ENCODE measurements at regions of chr18 and their contacts with region 1.

Region 1: GRCh38 chr18:3281456-3282400 is 19.8 kb downstream of the MYL12B start:
- DNase-seq: no peak
- ATAC-seq: peak; percentile 39
- H3K4me3 Mint-ChIP-seq: no peak overlapping the region
- H3K27ac Mint-ChIP-seq: no peak overlapping the region
- H3K4me1 Mint-ChIP-seq: peaks cover 41% of the 10 kb centered on the region
- H3K27me3 Mint-ChIP-seq: no peaks in the 10 kb centered on the region
- CTCF ChIP-seq: peak; percentile 49

Region 2: GRCh38 chr18:2360861-2361260 is 920.9 kb before region 1 on chr18:
- CTCF ChIA-PET with region 1: no interaction called
- POLR2A ChIA-PET with region 1: no interaction called
- intact Hi-C with region 1: no loop called
- DNase-seq: no peak
- ATAC-seq: no peak
- H3K4me3 Mint-ChIP-seq: no peak overlapping the region
- H3K27ac Mint-ChIP-seq: no peak overlapping the region
- H3K4me1 Mint-ChIP-seq: no peaks in the 10 kb centered on the region
- H3K27me3 Mint-ChIP-seq: no peaks in the 10 kb centered on the region
- CTCF ChIP-seq: no peak

Region 3: GRCh38 chr18:3261371-3262246 is 20.1 kb before region 1 on chr18 and contains the start of gene MYL12B:
- CTCF ChIA-PET with region 1: no interaction called
- POLR2A ChIA-PET with region 1: interaction called, 20 read pairs
- intact Hi-C with region 1: loop called (anchors 1 kb)
- DNase-seq: peak; percentile 81
- ATAC-seq: peak; percentile 83
- H3K4me3 Mint-ChIP-seq: peak within 1 kb of the TSS; percentile 94
- H3K27ac Mint-ChIP-seq: peak within 1 kb of the TSS; percentile 97
- H3K4me1 Mint-ChIP-seq: peaks cover 80% of the 10 kb centered on the region
- H3K27me3 Mint-ChIP-seq: no peaks in the 10 kb centered on the region
- CTCF ChIP-seq: no peak
- total RNA-seq, gene MYL12B: 185 and 198 TPM in 2 replicates

Region 4: GRCh38 chr18:3323900-3324299 is 42.2 kb after region 1 on chr18:
- CTCF ChIA-PET with region 1: no interaction called
- POLR2A ChIA-PET with region 1: no interaction called
- intact Hi-C with region 1: no loop called
- DNase-seq: no peak
- ATAC-seq: peak; percentile 37
- H3K4me3 Mint-ChIP-seq: no peak overlapping the region
- H3K27ac Mint-ChIP-seq: no peak overlapping the region
- H3K4me1 Mint-ChIP-seq: peaks cover 24% of the 10 kb centered on the region
- H3K27me3 Mint-ChIP-seq: no peaks in the 10 kb centered on the region
- CTCF ChIP-seq: no peak

Region 5: DNA sequence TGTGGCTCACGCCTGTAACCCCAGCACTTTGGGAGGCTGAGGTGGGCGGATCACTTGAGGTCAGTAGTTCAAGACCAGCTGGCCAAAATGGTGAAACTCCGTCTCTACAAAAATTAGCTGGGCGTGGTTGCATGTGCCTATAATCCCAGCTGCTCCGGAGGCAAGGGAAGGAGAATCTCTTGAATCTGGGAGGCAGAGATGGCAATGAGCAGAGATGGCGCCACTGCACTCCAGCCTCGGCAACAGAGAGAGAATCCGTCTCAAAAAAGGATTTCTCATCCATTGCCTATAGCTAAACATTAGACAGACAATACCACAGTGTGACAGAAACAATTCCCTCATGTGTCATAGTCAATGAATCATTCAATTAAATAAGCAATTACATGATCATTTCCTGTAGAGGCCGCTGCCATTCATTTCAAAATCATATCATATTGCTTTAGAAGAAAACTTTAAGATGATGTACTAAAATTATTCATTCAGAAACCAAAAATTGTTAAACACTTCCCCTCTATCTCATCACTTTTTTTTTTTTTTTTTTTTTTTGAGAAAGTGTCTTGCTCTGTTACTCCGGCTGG is 98.7 kb after region 1 on chr18:
- CTCF ChIA-PET with region 1: no interaction called
- POLR2A ChIA-PET with region 1: no interaction called
- intact Hi-C with region 1: loop called (anchors 2 kb)
- DNase-seq: no peak
- ATAC-seq: peak; percentile 66
- H3K4me3 Mint-ChIP-seq: no peak overlapping the region
- H3K27ac Mint-ChIP-seq: no peak overlapping the region
- H3K4me1 Mint-ChIP-seq: peaks cover 21% of the 10 kb centered on the region
- H3K27me3 Mint-ChIP-seq: no peaks in the 10 kb centered on the region
- CTCF ChIP-seq: no peak

Region 6: DNA sequence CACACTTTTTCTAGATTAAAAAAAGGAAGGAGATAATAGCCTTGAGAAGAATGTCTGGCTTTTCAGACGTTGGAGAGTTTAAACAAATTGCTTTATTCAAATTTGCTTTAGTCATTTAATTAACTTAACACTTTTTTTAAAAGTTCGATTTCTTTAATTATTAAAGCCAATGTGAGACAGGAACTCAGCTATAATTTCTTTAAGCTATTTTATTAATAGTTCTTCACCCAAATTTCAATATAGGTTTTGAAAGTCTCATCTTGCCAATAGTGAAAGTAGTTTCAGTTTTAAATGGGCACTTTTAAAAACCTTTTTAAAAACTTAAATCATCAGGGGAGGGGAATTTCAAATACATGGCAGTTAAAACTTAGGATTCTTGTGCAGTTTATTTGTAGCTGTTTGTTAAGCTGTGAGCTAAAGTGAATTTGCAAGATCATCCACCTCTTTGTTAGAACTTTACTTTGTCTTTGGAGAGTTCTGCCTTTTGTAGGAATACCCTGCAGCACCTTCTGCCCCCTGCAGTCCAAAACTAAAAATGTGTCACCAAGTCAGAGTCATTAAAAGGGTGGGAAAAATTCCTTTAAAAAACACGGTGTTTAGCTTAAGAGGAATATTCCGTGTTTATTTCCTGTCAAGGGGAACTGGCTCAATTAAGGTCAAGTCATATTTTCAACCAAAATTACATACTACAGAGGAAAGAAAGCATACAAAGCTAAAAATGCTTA is 172.8 kb after region 1 on chr18:
- CTCF ChIA-PET with region 1: interaction called, 31 read pairs
- POLR2A ChIA-PET with region 1: interaction called, 12 read pairs
- intact Hi-C with region 1: loop called (anchors 1 kb)
- DNase-seq: no peak
- ATAC-seq: no peak
- H3K4me3 Mint-ChIP-seq: peak overlapping the region; percentile 93
- H3K27ac Mint-ChIP-seq: peak overlapping the region; percentile 95
- H3K4me1 Mint-ChIP-seq: peaks cover 57% of the 10 kb centered on the region
- H3K27me3 Mint-ChIP-seq: no peaks in the 10 kb centered on the region
- CTCF ChIP-seq: no peak

Region 7: DNA sequence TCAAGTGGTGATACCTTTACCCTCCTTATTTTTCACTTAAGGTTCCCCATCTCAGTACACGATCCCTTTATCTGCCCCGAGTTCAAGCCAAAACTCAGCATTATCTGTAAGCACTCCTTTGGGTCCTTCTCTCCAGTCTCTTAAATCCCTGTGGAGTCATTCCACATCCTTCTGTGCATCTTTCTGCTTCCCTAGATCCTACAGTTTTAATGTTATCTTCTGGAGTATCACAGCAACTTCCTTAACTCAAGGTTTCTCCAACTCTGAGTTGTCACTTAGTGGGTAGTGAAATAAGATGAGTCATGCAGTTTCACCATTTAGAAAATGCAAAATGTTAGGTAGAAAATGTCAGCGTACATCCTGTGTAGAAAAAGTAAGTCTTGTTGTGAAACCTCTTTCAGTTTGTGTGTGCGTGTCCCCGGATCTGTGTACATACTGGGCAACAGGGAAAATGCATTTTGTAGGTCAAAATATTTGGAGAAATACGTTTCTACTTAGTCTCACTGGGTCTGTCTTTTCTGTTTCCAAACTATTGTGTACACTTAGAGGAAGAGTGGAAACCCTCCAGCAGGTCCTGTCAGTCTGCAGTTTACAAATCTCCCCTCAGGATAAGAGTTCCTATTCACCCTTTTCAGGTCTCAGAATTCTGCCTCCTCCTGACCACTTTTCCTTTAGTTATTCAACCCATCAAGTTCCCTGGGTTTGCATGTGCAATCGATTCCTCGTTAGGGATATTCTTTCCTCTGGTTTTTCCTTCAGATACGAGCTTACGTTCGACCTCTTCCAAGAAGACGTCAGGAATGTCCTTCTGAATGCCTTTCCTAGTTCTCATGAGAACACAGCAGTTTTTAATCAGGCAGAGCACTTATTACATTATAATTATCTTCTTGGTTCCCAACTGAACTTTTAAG is 323.0 kb after region 1 on chr18:
- CTCF ChIA-PET with region 1: no interaction called
- POLR2A ChIA-PET with region 1: interaction called, 14 read pairs
- intact Hi-C with region 1: no loop called
- DNase-seq: no peak
- ATAC-seq: peak; percentile 73
- H3K4me3 Mint-ChIP-seq: no peak overlapping the region
- H3K27ac Mint-ChIP-seq: no peak overlapping the region
- H3K4me1 Mint-ChIP-seq: peaks cover 3% of the 10 kb centered on the region
- H3K27me3 Mint-ChIP-seq: no peaks in the 10 kb centered on the region
- CTCF ChIP-seq: no peak

Region 8: DNA sequence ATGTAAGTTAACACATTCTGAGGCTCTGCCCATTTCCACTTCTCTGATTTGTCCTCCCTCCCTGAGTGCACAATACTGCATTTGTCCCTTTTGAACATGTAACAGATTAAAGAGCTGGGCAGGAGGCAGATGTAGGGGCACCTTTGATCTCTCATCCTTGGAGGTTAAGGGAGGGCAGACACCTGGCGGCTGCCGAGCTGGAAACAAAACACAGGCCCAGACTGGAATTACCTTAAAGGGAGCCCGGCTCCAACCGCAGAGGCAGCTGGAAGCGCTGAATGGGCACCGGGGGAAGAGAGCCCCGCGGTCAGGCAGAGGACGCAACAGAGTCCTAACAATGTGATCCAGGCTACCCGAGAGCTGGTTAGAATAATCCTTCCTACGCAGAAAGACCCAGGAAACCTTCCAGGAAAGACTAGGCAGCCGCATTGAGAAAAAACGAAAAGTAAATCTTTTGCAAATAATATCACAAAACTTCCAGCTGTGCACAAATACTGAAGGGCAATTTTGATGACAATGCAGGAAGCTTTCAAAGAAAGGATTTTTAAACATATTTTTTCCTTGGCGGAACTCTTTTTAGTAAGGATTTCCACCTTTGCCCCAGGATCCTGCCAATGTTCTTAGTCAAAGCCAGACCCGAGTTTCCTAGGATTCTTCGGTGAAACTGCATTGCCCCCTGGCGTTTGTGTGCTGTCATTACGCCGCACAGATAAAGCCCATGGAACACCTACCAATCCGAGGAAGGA is 384.2 kb after region 1 on chr18:
- CTCF ChIA-PET with region 1: interaction called, 239 read pairs
- POLR2A ChIA-PET with region 1: interaction called, 15 read pairs
- intact Hi-C with region 1: loop called (anchors 1 kb)
- DNase-seq: peak; percentile 51
- ATAC-seq: peak; percentile 84
- H3K4me3 Mint-ChIP-seq: no peak overlapping the region
- H3K27ac Mint-ChIP-seq: no peak overlapping the region
- H3K4me1 Mint-ChIP-seq: peaks cover 21% of the 10 kb centered on the region
- H3K27me3 Mint-ChIP-seq: no peaks in the 10 kb centered on the region
- CTCF ChIP-seq: peak; percentile 83

Region 9: GRCh38 chr18:3995476-3996102 is 713.9 kb after region 1 on chr18:
- CTCF ChIA-PET with region 1: interaction called, 6 read pairs
- POLR2A ChIA-PET with region 1: no interaction called
- intact Hi-C with region 1: loop called (anchors 1 kb)
- DNase-seq: no peak
- ATAC-seq: peak; percentile 40
- H3K4me3 Mint-ChIP-seq: no peak overlapping the region
- H3K27ac Mint-ChIP-seq: no peak overlapping the region
- H3K4me1 Mint-ChIP-seq: no peaks in the 10 kb centered on the region
- H3K27me3 Mint-ChIP-seq: no peaks in the 10 kb centered on the region
- CTCF ChIP-seq: no peak

Measured in activated B cell treated with CpG ODN at 0.5 μM for 24 hours (primary cell).